IMR-90 (cell line): ENCODE measurements at regions of chr1 and their contacts with region 1.

Region 1: DNA sequence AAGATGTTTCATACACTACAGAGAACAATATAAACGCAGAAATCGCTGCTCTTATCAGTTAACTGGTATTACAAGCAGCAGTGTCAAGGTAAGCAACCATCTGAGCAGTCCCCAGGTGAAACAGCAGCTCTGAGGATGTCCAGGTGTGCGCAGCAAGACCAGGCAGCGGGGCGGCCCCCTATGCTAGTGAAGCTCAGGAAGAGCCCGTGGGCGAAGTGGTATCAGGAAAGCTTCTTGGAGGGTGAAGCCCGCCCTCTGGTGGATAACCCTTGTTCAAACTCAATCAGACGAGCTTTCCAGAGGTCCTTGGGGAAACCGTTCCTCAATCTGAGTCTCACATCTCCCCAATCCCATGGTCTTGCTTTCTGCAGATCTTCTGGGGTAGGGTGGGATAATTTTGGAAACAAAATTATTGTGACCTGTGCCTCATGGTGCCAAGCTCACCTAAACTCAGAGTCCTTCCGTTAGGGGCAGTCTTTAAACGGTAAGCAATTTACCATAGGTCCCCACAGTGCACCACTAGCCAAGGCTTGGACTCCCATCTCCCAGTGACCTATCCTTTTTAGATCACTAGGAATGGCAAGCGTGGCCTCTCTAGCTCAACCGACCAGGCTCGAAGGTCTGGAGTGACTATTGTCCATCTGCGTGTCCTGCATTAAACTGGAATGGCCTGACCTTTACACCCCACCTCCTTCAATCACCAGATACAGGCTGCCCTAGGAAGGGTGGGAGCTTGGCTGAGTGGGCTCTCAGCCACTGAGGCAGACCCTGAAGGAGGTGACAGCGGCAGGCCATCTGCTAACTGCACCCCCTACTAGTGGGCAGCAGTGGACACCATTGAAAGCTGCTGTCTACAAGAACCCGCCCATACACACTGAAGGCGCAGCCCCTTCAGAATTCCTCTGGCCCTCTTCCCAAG is 13.6 kb upstream of the FAM110D start:
- DNase-seq: peak; percentile 80
- ATAC-seq: peak; percentile 97
- H3K4me3 ChIP-seq: no peak overlapping the region
- H3K27ac ChIP-seq: no peak overlapping the region
- H3K4me1 ChIP-seq: no peaks in the 10 kb centered on the region
- H3K27me3 ChIP-seq: peaks cover 27% of the 10 kb centered on the region
- CTCF ChIP-seq: peak; percentile 72
- POLR2A ChIP-seq: no peak
- RAD21 ChIP-seq: peak; percentile 77

Region 2: GRCh38 chr1:26044971-26045721 is 100.2 kb before region 1 on chr1:
- CTCF ChIA-PET with region 1: no interaction called
- POLR2A ChIA-PET with region 1: no interaction called
- dilution Hi-C with region 1: no loop called
- in situ Hi-C with region 1: loop called (anchors 5 kb)
- intact Hi-C with region 1: no loop called
- DNase-seq: no peak
- ATAC-seq: no peak
- H3K4me3 ChIP-seq: no peak overlapping the region
- H3K27ac ChIP-seq: no peak overlapping the region
- H3K4me1 ChIP-seq: no peaks in the 10 kb centered on the region
- H3K27me3 ChIP-seq: peaks cover 84% of the 10 kb centered on the region
- CTCF ChIP-seq: no peak
- POLR2A ChIP-seq: no peak
- RAD21 ChIP-seq: no peak

Region 3: GRCh38 chr1:26109229-26110164 is 35.8 kb before region 1 on chr1:
- CTCF ChIA-PET with region 1: interaction called, 3 read pairs
- POLR2A ChIA-PET with region 1: no interaction called
- dilution Hi-C with region 1: no loop called
- in situ Hi-C with region 1: loop called (anchors 5 kb)
- intact Hi-C with region 1: loop called (anchors 1 kb)
- DNase-seq: no peak
- ATAC-seq: no peak
- H3K4me3 ChIP-seq: no peak overlapping the region
- H3K27ac ChIP-seq: no peak overlapping the region
- H3K4me1 ChIP-seq: no peaks in the 10 kb centered on the region
- H3K27me3 ChIP-seq: no peaks in the 10 kb centered on the region
- CTCF ChIP-seq: no peak
- POLR2A ChIP-seq: no peak
- RAD21 ChIP-seq: no peak